ENCODE measurements at regions of chr17 and their contacts with region 1.

Region 1: DNA sequence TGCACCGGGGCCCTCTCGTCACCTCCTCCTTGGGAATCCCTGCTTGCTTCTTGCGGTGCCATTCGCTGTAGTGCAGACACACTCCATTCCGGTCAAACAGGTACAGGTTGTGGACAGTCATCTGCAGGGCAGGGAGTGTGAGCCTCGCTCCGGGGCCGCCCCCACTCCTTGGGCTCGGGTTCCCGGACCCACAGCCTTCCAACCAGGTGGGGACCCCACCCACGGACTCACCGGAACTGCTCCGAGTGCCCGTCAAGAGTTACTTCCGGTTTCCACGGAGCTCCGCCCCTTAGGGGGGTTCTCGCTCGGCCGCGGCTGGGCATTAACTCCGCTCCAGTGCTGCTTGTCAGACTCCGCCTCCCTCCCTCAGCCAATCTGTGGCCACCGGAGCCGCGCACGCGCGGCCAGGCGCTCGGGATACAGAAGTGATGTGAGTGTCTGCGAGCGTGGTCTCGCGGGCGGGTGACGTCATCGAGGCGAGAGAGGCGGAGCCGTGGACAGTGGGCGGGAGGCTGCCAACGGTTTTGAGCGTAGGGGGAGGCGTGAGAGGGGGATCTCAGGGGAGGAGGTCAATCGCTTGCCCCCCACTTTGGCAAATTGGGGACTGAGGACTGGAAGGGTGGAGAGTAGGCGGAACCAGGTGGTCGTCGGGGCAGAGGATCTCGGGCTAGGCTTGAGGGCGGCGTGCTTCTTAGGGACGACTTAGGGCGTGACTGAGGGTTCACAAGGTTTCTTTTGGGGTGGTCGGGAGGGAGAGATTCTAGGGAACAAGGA is at the starts of genes CNTROB and TRAPPC1:
- DNase-seq: peak; percentile 99 to 100 (median 99)
- H3K4me3 ChIP-seq: peak within 1 kb of the TSS; percentile 50 to 98 (median 88)
- H3K27ac ChIP-seq: peak within 1 kb of the TSS; percentile 92 to 97
- H3K4me1 ChIP-seq: peaks cover 7 to 37% (median 24%) of the 10 kb centered on the region in 4 experiments
- H3K27me3 ChIP-seq: no peaks in the 10 kb centered on the region

Region 2: GRCh38 chr17:7834962-7835813 is 96.7 kb before region 1 on chr17:
- CTCF ChIA-PET with region 1: no interaction called
- POLR2A ChIA-PET with region 1: no interaction called
- DNase-seq: peak; percentile 98 to 99 (median 99)
- H3K4me3 ChIP-seq: peak overlapping the region; percentile 67 to 92 (median 82)
- H3K27ac ChIP-seq: peak overlapping the region; percentile 98 to 99
- H3K4me1 ChIP-seq: peaks cover 12 to 62% (median 52%) of the 10 kb centered on the region in 4 experiments
- H3K27me3 ChIP-seq: no peaks in the 10 kb centered on the region

Region 3: GRCh38 chr17:7915611-7916382 is 16.1 kb before region 1 on chr17 and contains the start of gene RNF227:
- CTCF ChIA-PET with region 1: interaction called, 13 read pairs
- POLR2A ChIA-PET with region 1: interaction called, 13 read pairs
- DNase-seq: peak; percentile 93 to 96 (median 96)
- H3K4me3 ChIP-seq: peak within 1 kb of the TSS; percentile 11 to 80 (median 48)
- H3K27ac ChIP-seq: peak within 1 kb of the TSS in 1 of 2 experiments; percentile 36
- H3K4me1 ChIP-seq: peaks cover 0 to 27% (median 22%) of the 10 kb centered on the region in 4 experiments
- H3K27me3 ChIP-seq: peaks cover 0 to 3% (median 0%) of the 10 kb centered on the region in 5 experiments

Region 4: DNA sequence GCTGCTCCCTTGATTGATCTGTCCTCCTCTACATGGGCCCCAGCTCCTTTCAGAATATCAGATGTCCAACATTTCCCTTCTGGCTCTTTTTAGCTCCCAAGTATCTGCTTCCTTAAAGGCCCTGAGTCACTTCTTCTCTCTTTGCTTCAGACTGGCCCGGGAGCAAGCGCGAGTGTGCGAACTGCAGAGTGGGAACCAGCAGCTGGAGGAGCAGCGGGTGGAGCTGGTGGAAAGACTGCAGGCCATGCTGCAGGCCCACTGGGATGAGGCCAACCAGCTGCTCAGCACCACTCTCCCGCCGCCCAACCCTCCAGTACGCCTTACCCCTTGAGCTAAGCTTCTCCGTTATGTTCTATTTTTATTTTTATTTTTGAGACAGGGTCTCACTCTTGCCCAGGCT is 12.4 kb after region 1 on chr17:
- CTCF ChIA-PET with region 1: interaction called, 21 read pairs
- POLR2A ChIA-PET with region 1: interaction called, 6 read pairs
- DNase-seq: no peak
- H3K4me3 ChIP-seq: no peak overlapping the region
- H3K27ac ChIP-seq: no peak overlapping the region
- H3K4me1 ChIP-seq: no peaks in the 10 kb centered on the region
- H3K27me3 ChIP-seq: no peaks in the 10 kb centered on the region

Region 5: GRCh38 chr17:8029135-8029534 is 97.2 kb after region 1 on chr17:
- CTCF ChIA-PET with region 1: no interaction called
- POLR2A ChIA-PET with region 1: no interaction called
- DNase-seq: no peak
- H3K4me3 ChIP-seq: no peak overlapping the region
- H3K27ac ChIP-seq: no peak overlapping the region
- H3K4me1 ChIP-seq: no peaks in the 10 kb centered on the region
- H3K27me3 ChIP-seq: peaks cover 0 to 5% (median 0%) of the 10 kb centered on the region in 5 experiments